Panc1 (cell line): ENCODE measurements at regions of chr18 and their contacts with region 1.

Region 1: DNA sequence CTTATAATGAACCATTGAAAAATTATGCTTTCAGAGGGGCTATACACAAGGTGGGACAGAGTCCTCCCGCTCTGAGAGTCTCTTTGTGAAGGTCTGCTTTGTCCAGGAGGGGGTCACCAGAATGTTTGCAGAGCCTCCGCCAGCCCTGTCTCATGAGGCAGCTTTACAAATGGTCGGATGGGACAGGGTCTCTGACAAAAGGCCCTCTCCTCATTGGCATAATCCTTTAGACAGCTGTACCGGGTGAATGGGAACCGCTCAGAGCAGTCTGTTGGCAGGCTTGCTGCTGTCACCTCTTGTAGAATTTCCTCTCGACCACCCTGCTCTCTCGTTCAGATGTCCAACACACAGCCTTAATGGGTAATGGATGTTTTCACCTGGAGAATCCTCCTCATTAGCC is 40.2 kb upstream of the TGIF1 start:
- DNase-seq: no peak
- ATAC-seq: peak; percentile 30
- H3K4me3 ChIP-seq: no peak overlapping the region
- H3K27ac ChIP-seq: peak overlapping the region; percentile 93
- H3K4me1 ChIP-seq: peaks cover 36% of the 10 kb centered on the region
- H3K27me3 ChIP-seq: no peaks in the 10 kb centered on the region
- CTCF ChIP-seq: no peak

Region 2: GRCh38 chr18:3388982-3389381 is 20.8 kb before region 1 on chr18:
- CTCF ChIA-PET with region 1: no interaction called
- POLR2A ChIA-PET with region 1: no interaction called
- in situ Hi-C with region 1: no loop called
- intact Hi-C with region 1: loop called (anchors 2 kb)
- DNase-seq: no peak
- ATAC-seq: peak; percentile 83
- H3K4me3 ChIP-seq: no peak overlapping the region
- H3K27ac ChIP-seq: peak overlapping the region; percentile 52; the same call in 1 of the 2 replicates
- H3K4me1 ChIP-seq: peaks cover 6% of the 10 kb centered on the region; the same call in 1 of the 2 replicates
- H3K27me3 ChIP-seq: no peaks in the 10 kb centered on the region
- CTCF ChIP-seq: no peak